ENCODE measurements at regions of chr9 and their contacts with region 1.

Region 1: DNA sequence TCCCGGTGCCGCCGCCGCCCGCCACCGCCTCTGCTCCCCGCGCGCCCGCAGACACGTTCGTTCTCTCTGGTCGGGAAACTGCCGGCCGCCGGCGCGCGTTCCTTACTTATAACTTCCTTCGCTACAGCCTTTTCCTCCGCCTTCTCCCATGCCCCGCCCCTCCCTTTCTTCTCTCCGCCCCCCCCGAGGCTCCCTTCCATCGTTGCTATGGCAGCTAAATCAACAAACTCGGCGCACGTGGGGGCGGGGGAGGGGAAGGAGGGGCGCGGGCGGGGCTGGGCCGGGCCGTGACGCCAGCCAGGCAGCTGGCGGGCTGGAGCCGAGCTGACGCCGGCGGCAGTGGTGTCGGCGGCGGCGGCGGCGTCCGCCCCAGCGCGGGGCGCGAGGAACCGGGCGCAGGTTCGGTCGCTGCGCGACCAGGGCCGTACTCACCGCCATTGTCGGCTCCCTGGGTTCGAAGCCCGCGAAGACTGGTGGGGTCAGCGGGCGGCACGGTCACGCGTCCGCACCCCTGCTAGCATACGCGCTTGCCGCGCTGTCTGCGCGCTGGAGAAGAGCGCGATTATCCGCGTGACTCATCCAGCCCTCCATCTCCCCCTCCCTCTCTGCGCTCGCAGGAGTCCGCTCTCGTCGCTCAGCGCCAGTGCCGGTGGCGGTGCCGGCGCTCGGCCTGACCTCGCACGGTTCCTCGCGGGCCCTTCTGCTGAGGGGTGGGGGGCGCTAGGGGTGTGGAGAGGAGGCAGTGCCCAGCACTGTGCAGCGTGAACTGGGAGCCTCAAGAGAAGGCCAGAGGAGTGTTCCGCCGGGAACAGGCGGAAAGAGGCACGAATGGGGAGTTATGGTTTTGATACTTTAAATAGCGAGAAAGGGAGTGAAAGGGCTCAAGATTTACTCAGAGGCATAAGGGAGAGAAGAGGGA is at the start of gene KLF4:
- DNase-seq: peak; percentile 94
- H3K4me3 ChIP-seq: peak within 1 kb of the TSS; percentile 47 to 68 (median 63)
- H3K27ac ChIP-seq: peak within 1 kb of the TSS; percentile 66
- H3K4me1 ChIP-seq: peaks cover 19% of the 10 kb centered on the region
- H3K27me3 ChIP-seq: peaks cover 8 to 22% of the 10 kb centered on the region in 2 experiments
- CTCF ChIP-seq: no peak
- POLR2A ChIP-seq: peak; percentile 33
- total RNA-seq, gene KLF4: 1.5 and 3.8 TPM in 2 replicates

Region 2: DNA sequence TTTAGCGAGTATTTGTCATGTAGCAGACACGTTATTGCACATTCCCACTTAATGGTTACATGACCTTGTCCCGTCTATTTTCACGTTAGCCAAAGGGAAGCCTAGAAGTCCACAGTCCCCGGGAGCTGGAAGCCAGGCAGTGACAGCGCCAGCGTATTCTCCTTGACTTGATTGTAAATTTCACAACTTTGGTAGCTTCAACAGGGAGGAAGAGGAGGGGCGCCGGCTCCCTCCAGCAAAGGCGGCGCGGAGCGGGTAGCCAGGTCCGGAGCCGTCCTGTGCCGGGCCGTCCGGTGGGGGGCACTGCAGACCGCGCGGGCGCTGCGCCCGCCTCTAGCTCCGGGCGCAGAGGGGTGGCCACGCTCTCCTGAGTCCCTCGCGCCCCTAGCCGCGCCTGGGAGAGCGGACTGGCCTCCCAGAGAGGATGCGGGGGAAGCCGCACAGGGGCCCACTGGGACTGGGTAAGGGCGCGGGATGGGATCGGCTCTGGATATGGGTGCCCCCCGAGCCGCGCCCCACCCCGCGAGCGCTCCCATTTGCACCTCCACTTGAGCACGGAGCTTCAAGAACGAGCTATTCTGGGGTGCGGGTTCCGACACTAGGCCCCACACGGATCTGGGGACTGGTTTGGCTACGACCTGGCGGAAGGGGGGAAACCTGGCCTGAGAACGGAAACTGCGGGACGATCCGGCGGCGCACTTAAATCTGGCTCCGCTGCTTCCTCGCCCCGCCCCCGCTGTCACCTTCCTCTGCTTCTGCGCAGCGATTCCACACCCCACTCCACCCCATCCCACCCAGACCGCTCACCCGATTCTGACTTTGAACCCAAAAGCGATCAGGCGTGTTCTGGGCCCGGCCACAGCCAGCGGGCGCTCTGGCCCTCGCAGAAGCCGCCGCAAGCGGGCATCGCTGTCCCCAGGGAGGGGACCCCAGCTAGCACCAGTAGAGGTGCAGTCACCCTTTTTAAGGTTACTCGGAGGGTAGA is 24.2 kb before region 1 on chr9:
- CTCF ChIA-PET with region 1: interaction called, 10 read pairs
- POLR2A ChIA-PET with region 1: no interaction called
- dilution Hi-C with region 1: no loop called
- intact Hi-C with region 1: loop called (anchors 1 kb)
- DNase-seq: peak; percentile 47
- H3K4me3 ChIP-seq: peak overlapping the region; percentile 32 to 57 (median 46)
- H3K27ac ChIP-seq: no peak overlapping the region
- H3K4me1 ChIP-seq: peaks cover 3% of the 10 kb centered on the region
- H3K27me3 ChIP-seq: peaks cover 0 to 3% of the 10 kb centered on the region in 2 experiments
- CTCF ChIP-seq: peak; percentile 86 to 88
- POLR2A ChIP-seq: no peak

Region 3: DNA sequence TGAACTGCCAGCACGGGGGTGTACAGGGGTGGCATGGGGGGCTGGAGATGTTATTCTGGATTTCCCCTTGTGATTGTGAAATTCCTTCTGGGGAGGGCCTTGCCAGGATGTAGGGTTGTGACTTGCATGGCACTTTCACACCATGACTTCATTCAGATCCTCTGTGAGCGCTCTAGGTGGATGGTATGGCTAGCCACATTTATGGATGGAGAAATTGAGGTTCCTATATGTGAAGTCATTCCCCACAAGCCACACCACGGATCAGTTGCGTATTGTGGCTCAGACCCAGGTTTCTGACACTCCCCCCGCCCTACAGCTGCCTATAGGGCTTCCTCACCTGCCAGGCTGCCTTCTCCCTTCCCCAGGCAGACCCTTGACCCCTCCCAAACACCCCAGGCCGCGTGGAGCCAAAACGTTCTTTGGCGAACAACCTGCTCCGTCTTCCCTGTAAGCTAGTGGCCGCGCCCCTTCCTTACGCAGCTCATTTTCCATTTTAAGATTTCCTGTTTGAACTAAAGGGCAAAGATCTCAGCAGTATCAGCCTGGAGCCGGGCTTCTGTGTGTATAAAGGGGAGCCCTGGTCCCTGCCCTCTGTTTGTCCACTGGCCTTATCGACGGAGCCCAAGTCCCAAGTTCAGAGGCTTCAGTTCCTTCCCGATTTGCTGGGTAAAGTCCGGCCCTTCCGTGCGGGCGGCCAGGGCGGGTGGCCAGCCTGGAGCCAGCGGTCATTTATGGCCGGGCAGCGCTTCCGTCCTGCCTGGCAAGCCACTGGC is 97.4 kb after region 1 on chr9:
- CTCF ChIA-PET with region 1: no interaction called
- POLR2A ChIA-PET with region 1: no interaction called
- dilution Hi-C with region 1: no loop called
- intact Hi-C with region 1: loop called (anchors 2 kb)
- DNase-seq: peak; percentile 69
- H3K4me3 ChIP-seq: peak overlapping the region in 2 of 3 experiments; percentile 10 to 38
- H3K27ac ChIP-seq: peak overlapping the region; percentile 58
- H3K4me1 ChIP-seq: peaks cover 12% of the 10 kb centered on the region
- H3K27me3 ChIP-seq: no peaks in the 10 kb centered on the region
- CTCF ChIP-seq: no peak
- POLR2A ChIP-seq: no peak

Region 4: GRCh38 chr9:107749787-107750444 is 260.0 kb after region 1 on chr9:
- CTCF ChIA-PET with region 1: interaction called, 6 read pairs
- POLR2A ChIA-PET with region 1: no interaction called
- dilution Hi-C with region 1: no loop called
- intact Hi-C with region 1: loop called (anchors 1 kb)
- DNase-seq: peak; percentile 84
- H3K4me3 ChIP-seq: no peak overlapping the region
- H3K27ac ChIP-seq: peak overlapping the region; percentile 60
- H3K4me1 ChIP-seq: peaks cover 46% of the 10 kb centered on the region
- H3K27me3 ChIP-seq: no peaks in the 10 kb centered on the region
- CTCF ChIP-seq: no peak
- POLR2A ChIP-seq: peak; percentile 7

Region 5: DNA sequence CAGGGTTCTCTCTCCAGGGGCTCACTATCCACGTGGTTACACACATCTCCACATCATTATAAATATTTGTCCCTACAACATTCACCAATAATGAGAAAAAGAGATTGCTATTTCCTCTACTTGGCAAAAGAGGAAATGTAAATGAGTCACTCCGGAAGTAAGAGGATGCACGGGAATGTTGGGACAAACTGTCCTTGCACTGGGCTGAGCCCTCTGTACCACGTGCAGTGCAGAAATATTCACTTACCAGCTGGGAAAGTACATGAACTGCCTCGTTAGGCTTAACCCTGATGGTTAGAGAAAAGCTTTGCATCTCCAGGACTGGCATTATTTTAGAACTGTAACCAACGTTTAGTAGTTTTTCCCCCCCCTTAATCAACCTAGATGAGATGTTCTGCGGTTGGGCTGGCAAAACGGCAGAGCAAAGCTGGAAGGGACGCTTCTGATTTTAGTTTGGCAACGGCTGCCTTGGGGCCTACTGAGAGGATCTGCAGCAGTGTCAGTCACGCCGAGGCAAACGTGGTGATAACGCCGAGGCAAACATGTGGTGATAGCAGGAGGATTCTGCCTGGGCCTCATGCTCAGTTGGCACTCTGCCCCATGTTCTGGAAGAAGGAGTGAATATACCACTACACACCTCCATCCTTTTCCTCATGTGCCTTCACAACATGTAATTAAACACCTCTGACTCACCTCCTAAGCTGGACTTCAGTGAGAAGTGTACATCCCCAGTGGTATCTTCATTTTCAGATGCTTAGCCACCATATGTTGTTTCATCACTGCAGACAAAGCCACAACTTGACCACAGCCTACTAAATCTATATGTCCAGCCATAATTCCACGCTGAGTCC is 661.0 kb after region 1 on chr9:
- CTCF ChIA-PET with region 1: no interaction called
- POLR2A ChIA-PET with region 1: no interaction called
- dilution Hi-C with region 1: no loop called
- intact Hi-C with region 1: loop called (anchors 1 kb)
- DNase-seq: peak; percentile 87
- H3K4me3 ChIP-seq: no peak overlapping the region
- H3K27ac ChIP-seq: peak overlapping the region; percentile 83
- H3K4me1 ChIP-seq: peaks cover 28% of the 10 kb centered on the region
- H3K27me3 ChIP-seq: no peaks in the 10 kb centered on the region
- CTCF ChIP-seq: no peak
- POLR2A ChIP-seq: no peak

Measured in endothelial cell of umbilical vein (primary cell).